ENCODE measurements at regions of chr14 and their contacts with region 1.

Region 1: GRCh38 chr14:55088356-55088755 is 36.9 kb downstream of the MAPK1IP1L start:
- DNase-seq: no peak
- H3K4me3 Mint-ChIP-seq: no peak overlapping the region
- H3K27ac Mint-ChIP-seq: no peak overlapping the region
- H3K4me1 Mint-ChIP-seq: peaks cover 8% of the 10 kb centered on the region
- H3K27me3 Mint-ChIP-seq: peaks cover 11% of the 10 kb centered on the region

Region 2: DNA sequence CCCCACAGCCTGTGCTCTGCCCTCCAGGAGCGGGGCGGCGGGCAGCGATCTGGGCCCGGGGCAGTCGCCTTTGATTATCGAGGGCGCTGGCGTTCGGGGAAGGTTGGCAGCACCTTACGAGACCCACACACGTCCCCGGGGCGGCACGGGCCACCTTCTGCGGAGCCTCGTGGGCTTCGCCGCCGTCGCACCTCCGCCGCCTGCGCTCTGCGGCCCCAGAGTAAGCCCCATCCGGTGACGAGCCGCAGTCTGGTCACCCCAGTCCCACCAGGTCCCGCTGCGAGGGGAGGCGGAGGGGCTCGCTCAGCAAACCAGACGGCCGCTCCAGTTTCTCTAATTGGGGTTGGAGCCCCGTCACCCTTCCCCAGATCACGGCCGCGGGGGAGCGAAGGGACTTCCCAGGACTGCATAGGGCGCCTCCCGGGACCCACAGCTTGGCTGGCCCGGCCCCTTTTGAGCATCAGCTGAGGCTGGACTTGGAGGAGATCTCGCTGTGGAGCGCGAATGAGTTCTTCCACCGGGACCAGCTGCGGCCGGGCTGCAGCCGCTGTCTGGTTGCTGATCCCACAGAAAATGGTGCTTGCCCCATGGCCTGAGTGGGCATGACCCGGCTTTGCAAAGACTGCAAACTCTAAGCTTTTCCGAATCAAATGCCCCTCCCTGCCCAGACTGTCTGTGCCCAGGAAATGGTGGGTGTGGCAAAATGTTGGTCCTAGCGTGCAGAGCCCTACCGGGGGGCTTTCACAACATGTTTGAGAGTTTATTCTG is 41.3 kb after region 1 on chr14:
- intact Hi-C with region 1: loop called (anchors 2 kb)
- DNase-seq: peak; percentile 83
- H3K4me3 Mint-ChIP-seq: peak overlapping the region; percentile 82
- H3K27ac Mint-ChIP-seq: peak overlapping the region; percentile 63
- H3K4me1 Mint-ChIP-seq: peaks cover 29% of the 10 kb centered on the region
- H3K27me3 Mint-ChIP-seq: peaks cover 20% of the 10 kb centered on the region

Region 3: GRCh38 chr14:55285048-55285652 is 196.8 kb after region 1 on chr14:
- intact Hi-C with region 1: no loop called
- DNase-seq: no peak
- H3K4me3 Mint-ChIP-seq: no peak overlapping the region
- H3K27ac Mint-ChIP-seq: no peak overlapping the region
- H3K4me1 Mint-ChIP-seq: peaks cover 21% of the 10 kb centered on the region
- H3K27me3 Mint-ChIP-seq: no peaks in the 10 kb centered on the region